Endothelial cell of umbilical vein (primary cell): ENCODE measurements at regions of chr4 and their contacts with region 1.

Region 1: GRCh38 chr4:169030575-169030982 is 20.5 kb upstream of the CBR4 start:
- DNase-seq: peak; percentile 57
- H3K4me3 ChIP-seq: no peak overlapping the region
- H3K27ac ChIP-seq: no peak overlapping the region
- H3K4me1 ChIP-seq: peaks cover 9% of the 10 kb centered on the region
- H3K27me3 ChIP-seq: no peaks in the 10 kb centered on the region
- CTCF ChIP-seq: no peak
- POLR2A ChIP-seq: no peak

Region 2: DNA sequence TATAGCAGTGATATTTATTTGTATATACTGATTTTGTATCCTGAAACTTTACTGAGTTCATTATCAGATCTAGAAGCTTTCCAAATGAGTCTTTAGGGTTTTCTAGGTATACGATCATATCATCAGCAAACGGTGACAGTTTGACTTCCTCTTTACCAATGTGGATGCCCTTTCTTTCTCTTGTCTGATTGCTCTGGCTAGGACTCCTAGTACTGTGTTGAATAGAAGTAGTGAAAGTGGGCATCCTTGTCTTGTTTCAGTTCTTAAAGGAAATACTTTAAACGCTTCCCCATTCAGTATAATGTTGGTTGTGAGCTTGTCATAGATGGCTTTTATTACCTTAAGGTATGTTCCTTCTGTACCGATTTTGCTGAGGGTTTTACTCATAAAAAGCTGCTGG is 58.0 kb before region 1 on chr4:
- CTCF ChIA-PET with region 1: no interaction called
- POLR2A ChIA-PET with region 1: no interaction called
- dilution Hi-C with region 1: no loop called
- intact Hi-C with region 1: no loop called
- DNase-seq: no peak
- H3K4me3 ChIP-seq: no peak overlapping the region
- H3K27ac ChIP-seq: no peak overlapping the region
- H3K4me1 ChIP-seq: no peaks in the 10 kb centered on the region
- H3K27me3 ChIP-seq: no peaks in the 10 kb centered on the region
- CTCF ChIP-seq: no peak
- POLR2A ChIP-seq: no peak

Region 3: GRCh38 chr4:169051761-169052593 is 21.4 kb after region 1 on chr4:
- CTCF ChIA-PET with region 1: interaction called, 7 read pairs
- POLR2A ChIA-PET with region 1: no interaction called
- dilution Hi-C with region 1: no loop called
- intact Hi-C with region 1: loop called (anchors 2 kb)
- DNase-seq: no peak
- H3K4me3 ChIP-seq: no peak overlapping the region
- H3K27ac ChIP-seq: no peak overlapping the region
- H3K4me1 ChIP-seq: peaks cover 17% of the 10 kb centered on the region
- H3K27me3 ChIP-seq: no peaks in the 10 kb centered on the region
- CTCF ChIP-seq: no peak
- POLR2A ChIP-seq: no peak